Prostate gland (tissue), 2 donors: ENCODE measurements at regions of chr3 and their contacts with region 1.

Region 1: GRCh38 chr3:146218880-146219866 is 31.7 kb downstream of the PLSCR4 start:
- DNase-seq: peak; percentile 7
- H3K4me3 ChIP-seq: no peak overlapping the region
- H3K27ac ChIP-seq: no peak overlapping the region
- H3K4me1 ChIP-seq: peaks cover 3% of the 10 kb centered on the region
- H3K27me3 ChIP-seq: no peaks in the 10 kb centered on the region
- CTCF ChIP-seq: peak; percentile 56 to 81 (median 76)
- POLR2A ChIP-seq: no peak

Region 2: DNA sequence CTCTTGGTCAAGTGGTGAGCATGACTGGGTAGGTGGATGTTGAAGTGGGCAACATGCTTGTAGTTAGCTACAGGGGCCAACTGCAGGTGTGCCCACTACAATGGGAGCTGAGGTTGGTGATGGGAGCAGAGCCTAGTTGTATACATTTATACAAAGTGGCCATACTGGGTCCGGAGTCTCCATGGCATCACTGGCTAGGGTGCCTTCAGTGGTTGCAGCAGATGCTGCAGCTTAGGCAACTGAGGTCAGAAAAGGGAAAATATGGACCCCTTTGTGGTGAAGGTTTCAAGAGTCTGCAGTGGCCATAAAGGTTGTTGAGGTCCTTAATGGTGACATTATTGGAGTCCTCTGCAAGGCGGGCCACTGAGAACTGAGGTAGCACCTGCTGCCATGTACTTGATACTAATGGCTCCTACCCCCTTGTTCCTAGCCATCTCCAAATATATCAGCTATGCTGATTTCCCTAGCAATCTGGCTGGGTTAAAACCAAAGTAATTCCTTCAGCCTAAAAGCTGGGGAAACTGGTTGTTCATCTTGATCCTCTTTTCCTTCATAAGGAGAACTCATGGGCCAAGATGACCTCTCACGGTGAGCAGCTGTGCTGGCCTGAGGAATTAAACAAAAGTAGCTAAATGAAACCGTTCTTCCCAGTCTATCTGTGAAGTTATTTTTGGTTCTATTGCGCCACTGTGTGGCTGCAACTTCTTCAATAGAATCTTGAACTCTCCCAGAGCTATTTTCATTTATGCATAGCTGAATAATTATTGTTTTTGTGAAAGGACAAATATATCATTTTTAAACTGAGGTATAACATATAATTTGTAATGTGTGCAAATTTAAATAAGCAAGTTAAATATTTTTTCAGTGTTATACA is 107.7 kb after region 1 on chr3:
- intact Hi-C with region 1: loop called (anchors 5 kb)
- DNase-seq: no peak
- H3K4me3 ChIP-seq: no peak overlapping the region
- H3K27ac ChIP-seq: no peak overlapping the region
- H3K4me1 ChIP-seq: no peaks in the 10 kb centered on the region
- H3K27me3 ChIP-seq: no peaks in the 10 kb centered on the region
- CTCF ChIP-seq: peak in 3 of 4 experiments; percentile 41 to 68 (median 58)
- POLR2A ChIP-seq: no peak

Region 3: DNA sequence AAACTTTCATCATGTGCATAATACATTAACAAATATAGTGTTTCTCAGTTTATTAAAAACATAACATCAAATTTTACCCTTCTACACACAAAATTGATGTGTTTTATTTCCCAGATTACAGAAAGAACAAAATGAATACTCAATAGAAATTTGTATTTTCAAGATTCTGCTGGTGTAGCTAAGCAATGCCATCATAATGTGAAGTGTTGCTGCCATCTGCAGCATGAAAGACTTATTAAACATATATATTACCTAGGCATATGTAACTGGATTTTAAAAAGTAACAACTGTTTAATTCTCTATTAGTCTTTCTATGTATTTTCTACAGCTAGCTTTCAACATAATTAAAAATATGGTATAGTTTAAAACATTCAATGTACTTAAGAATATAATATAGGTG is 358.5 kb after region 1 on chr3:
- intact Hi-C with region 1: loop called (anchors 5 kb)
- DNase-seq: peak; percentile 19
- H3K4me3 ChIP-seq: no peak overlapping the region
- H3K27ac ChIP-seq: no peak overlapping the region
- H3K4me1 ChIP-seq: no peaks in the 10 kb centered on the region
- H3K27me3 ChIP-seq: no peaks in the 10 kb centered on the region
- CTCF ChIP-seq: peak in 3 of 4 experiments; percentile 37 to 63 (median 57)
- POLR2A ChIP-seq: no peak